ENCODE measurements at regions of chr1 and their contacts with region 1.

Region 1: GRCh38 chr1:43934101-43934985 is 742 bp downstream of the ARTN start:
- DNase-seq: peak; percentile 92
- ATAC-seq: peak; percentile 60
- H3K4me3 Mint-ChIP-seq: peak overlapping the region; percentile 84
- H3K27ac Mint-ChIP-seq: peak overlapping the region; percentile 88
- H3K4me1 Mint-ChIP-seq: peaks cover 54% of the 10 kb centered on the region
- H3K27me3 Mint-ChIP-seq: peaks cover 8% of the 10 kb centered on the region
- CTCF ChIP-seq: peak; percentile 78

Region 2: DNA sequence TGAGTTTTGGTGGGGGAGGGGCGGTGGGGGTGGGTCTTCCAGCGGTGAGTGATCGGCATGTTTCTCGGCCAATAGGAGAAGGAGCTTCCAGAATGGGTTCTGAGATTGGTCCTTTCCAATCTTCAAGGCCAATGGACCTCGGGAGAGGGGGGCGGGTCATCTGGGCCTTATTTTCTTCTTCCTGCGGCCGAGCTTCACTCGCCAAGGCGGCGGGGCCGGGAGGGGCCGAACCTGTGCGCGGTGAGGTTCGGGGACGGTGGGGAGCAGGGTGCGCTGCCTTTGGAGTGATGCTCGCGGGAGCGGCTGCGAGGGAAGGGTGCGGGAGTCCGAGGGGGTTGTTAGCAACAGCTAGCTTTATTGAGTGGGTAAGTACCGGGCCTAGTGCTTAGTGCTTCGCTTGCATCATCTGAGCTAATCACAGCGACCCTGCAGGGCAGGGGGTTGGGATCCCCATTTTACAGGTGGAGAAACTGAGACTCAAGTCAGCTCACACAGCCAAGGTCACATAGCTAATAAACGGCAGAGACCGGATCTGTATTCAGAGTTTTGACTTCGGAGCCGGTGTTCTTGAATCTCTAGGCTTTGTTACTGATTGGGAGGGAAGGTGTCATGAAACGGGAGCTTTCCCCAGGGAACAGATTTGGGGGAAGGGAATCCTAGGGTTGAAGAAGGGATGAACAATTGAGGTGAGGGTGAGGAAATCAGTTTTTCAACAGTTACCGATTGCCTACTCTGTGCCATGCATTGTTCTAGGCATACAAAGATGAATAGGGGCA is 283.8 kb before region 1 on chr1:
- CTCF ChIA-PET with region 1: interaction called, 28 read pairs
- POLR2A ChIA-PET with region 1: interaction called, 5 read pairs
- DNase-seq: peak; percentile 97
- ATAC-seq: peak; percentile 73
- H3K4me3 Mint-ChIP-seq: peak overlapping the region; percentile 96
- H3K27ac Mint-ChIP-seq: peak overlapping the region; percentile 100
- H3K4me1 Mint-ChIP-seq: peaks cover 35% of the 10 kb centered on the region
- H3K27me3 Mint-ChIP-seq: peaks cover 5% of the 10 kb centered on the region
- CTCF ChIP-seq: no peak

Region 3: GRCh38 chr1:43678940-43679339 is 255.4 kb before region 1 on chr1:
- CTCF ChIA-PET with region 1: no interaction called
- POLR2A ChIA-PET with region 1: no interaction called
- DNase-seq: no peak
- ATAC-seq: no peak
- H3K4me3 Mint-ChIP-seq: no peak overlapping the region
- H3K27ac Mint-ChIP-seq: no peak overlapping the region
- H3K4me1 Mint-ChIP-seq: no peaks in the 10 kb centered on the region
- H3K27me3 Mint-ChIP-seq: no peaks in the 10 kb centered on the region
- CTCF ChIP-seq: no peak

Region 4: DNA sequence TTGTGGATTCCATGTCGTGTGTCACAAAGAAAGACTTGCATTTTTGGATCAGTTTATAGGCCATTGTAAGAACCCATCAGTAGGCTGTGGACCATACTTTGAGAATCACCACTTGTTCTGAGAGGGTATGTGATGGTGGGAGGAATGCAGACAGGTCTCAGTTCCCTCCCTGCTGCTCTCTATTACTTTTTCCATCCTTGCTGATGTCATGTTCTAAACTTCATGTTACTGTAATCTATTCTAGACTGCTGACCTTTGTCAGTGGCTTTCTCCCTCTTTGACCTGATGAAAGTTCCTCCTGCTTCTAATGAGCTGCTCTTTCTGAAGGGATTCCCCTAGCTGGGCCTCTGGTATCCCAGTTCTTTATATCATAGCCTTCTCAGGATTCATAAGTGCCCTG is 180.9 kb before region 1 on chr1:
- CTCF ChIA-PET with region 1: interaction called, 11 read pairs
- POLR2A ChIA-PET with region 1: no interaction called
- DNase-seq: no peak
- ATAC-seq: no peak
- H3K4me3 Mint-ChIP-seq: no peak overlapping the region
- H3K27ac Mint-ChIP-seq: no peak overlapping the region
- H3K4me1 Mint-ChIP-seq: no peaks in the 10 kb centered on the region
- H3K27me3 Mint-ChIP-seq: no peaks in the 10 kb centered on the region
- CTCF ChIP-seq: no peak

Region 5: GRCh38 chr1:43796111-43796581 is 138.2 kb before region 1 on chr1:
- CTCF ChIA-PET with region 1: interaction called, 11 read pairs
- POLR2A ChIA-PET with region 1: no interaction called
- DNase-seq: no peak
- ATAC-seq: no peak
- H3K4me3 Mint-ChIP-seq: no peak overlapping the region
- H3K27ac Mint-ChIP-seq: no peak overlapping the region
- H3K4me1 Mint-ChIP-seq: no peaks in the 10 kb centered on the region
- H3K27me3 Mint-ChIP-seq: no peaks in the 10 kb centered on the region; the same call in 1 of the 2 replicates
- CTCF ChIP-seq: no peak

Region 6: GRCh38 chr1:43853161-43853921 is 81.0 kb before region 1 on chr1:
- CTCF ChIA-PET with region 1: interaction called, 32 read pairs
- POLR2A ChIA-PET with region 1: no interaction called
- DNase-seq: no peak
- ATAC-seq: 0 out of 2 replicates have a peak, but pooled peaks have one; percentile 24
- H3K4me3 Mint-ChIP-seq: no peak overlapping the region
- H3K27ac Mint-ChIP-seq: no peak overlapping the region
- H3K4me1 Mint-ChIP-seq: peaks cover 14% of the 10 kb centered on the region
- H3K27me3 Mint-ChIP-seq: no peaks in the 10 kb centered on the region; the same call in 1 of the 2 replicates
- CTCF ChIP-seq: no peak

Region 7: DNA sequence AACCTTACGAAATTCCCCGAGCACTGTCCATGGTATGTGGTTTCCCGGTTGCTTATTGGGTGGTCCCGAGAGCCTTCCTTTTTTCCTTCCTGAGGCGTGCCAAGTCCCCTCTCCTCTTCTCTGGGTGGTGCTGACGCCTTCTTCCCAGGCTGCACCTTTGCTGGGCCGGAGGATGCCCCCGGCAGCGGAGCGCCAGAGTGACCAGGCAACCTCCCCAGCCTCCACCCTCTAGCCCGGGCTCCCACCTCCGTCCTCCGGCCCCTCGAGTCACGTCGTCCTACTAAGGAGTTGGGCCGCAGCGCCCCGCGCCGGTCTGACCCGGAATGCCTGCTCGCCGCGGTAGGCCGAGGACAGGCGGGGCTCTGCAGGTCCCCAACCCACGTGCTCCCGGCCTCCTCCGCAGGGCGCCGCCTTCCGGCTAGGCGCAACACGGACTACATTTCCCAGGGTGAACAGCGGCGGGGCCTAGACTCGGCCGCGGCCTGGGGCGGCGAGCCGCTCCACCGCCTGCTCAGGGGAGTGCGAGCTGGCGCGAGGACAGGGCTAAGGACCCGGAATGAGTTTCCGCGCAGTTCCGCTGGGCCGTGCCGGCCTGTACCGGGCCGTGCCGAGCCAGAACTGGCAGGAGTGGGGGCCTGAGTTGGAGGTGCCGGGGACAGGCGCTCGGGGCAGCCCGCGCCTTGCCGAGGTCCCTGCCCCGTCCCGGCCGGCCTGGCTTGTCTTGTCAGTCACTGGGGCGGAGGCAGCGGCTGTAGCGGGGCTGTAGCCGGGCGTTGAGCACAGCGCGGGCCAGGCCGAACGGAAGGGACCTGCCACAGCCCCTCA is 12.1 kb after region 1 on chr1 and contains the start of gene IPO13:
- CTCF ChIA-PET with region 1: interaction called, 172 read pairs
- POLR2A ChIA-PET with region 1: interaction called, 8 read pairs
- DNase-seq: peak; percentile 98
- ATAC-seq: peak; percentile 91
- H3K4me3 Mint-ChIP-seq: peak within 1 kb of the TSS; percentile 83
- H3K27ac Mint-ChIP-seq: peak within 1 kb of the TSS; percentile 93
- H3K4me1 Mint-ChIP-seq: peaks cover 37% of the 10 kb centered on the region
- H3K27me3 Mint-ChIP-seq: no peaks in the 10 kb centered on the region
- CTCF ChIP-seq: peak; percentile 66
- total RNA-seq, gene IPO13: 17.8 to 24.2 TPM (median 19.1 TPM) in 3 replicates

Region 8: DNA sequence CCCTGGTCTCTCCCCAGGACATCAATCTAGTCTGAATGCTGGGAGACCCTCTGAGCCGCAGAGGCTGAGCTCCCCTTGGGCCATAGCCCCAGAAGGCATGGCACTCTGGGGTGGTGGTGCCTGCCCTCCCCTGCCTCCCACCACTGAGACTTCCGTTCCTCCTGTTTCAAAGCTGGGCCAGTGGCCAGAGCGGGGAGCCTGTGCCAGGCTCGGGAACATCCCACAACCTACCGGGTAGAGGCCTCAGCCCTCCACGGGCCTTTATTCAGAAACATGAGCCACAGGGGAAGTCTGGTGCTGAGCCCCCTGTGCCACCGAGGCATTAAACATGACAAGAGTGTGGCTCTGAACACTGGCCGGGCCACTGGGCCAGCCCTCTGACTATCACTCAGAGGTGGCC is 65.1 kb after region 1 on chr1:
- CTCF ChIA-PET with region 1: no interaction called
- POLR2A ChIA-PET with region 1: no interaction called
- DNase-seq: no peak
- ATAC-seq: no peak
- H3K4me3 Mint-ChIP-seq: no peak overlapping the region
- H3K27ac Mint-ChIP-seq: no peak overlapping the region
- H3K4me1 Mint-ChIP-seq: peaks cover 8% of the 10 kb centered on the region
- H3K27me3 Mint-ChIP-seq: no peaks in the 10 kb centered on the region; the same call in 1 of the 2 replicates
- CTCF ChIP-seq: no peak

Region 9: DNA sequence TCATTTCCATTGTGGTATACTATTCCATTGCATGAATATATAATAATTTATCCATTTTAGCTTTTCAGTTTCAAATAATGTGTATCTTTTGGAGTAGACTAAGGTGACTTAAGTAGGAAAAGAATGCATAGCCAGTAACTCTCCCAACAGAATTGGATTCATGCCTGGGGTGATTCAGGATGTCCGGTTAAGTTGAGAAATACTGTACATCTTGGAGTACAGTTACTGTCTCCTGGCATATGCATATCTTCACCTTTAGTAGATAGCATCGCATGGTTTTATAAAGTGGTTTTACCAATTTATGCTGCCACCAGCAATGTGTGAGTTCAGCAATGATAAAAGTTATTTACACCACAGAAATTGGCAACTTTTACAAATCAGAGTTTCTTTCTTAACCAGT is 115.5 kb after region 1 on chr1:
- CTCF ChIA-PET with region 1: interaction called, 28 read pairs
- POLR2A ChIA-PET with region 1: no interaction called
- DNase-seq: no peak
- ATAC-seq: no peak
- H3K4me3 Mint-ChIP-seq: no peak overlapping the region
- H3K27ac Mint-ChIP-seq: no peak overlapping the region
- H3K4me1 Mint-ChIP-seq: no peaks in the 10 kb centered on the region
- H3K27me3 Mint-ChIP-seq: peaks cover 17% of the 10 kb centered on the region
- CTCF ChIP-seq: no peak

Region 10: GRCh38 chr1:44405041-44405797 is 470.9 kb after region 1 on chr1 and contains the start of gene RNF220:
- CTCF ChIA-PET with region 1: no interaction called
- POLR2A ChIA-PET with region 1: no interaction called
- DNase-seq: peak; percentile 69
- ATAC-seq: peak; percentile 74
- H3K4me3 Mint-ChIP-seq: peak within 1 kb of the TSS; percentile 95
- H3K27ac Mint-ChIP-seq: peak within 1 kb of the TSS; percentile 96
- H3K4me1 Mint-ChIP-seq: 0 out of 2 replicates have a peak, but pooled peaks cover 3% of the 10 kb centered on the region
- H3K27me3 Mint-ChIP-seq: peaks cover 20% of the 10 kb centered on the region
- CTCF ChIP-seq: no peak
- total RNA-seq, gene RNF220: 117 to 128 TPM (median 124 TPM) in 3 replicates